ENCODE measurements at regions of chr2 and their contacts with region 1.

Region 1: DNA sequence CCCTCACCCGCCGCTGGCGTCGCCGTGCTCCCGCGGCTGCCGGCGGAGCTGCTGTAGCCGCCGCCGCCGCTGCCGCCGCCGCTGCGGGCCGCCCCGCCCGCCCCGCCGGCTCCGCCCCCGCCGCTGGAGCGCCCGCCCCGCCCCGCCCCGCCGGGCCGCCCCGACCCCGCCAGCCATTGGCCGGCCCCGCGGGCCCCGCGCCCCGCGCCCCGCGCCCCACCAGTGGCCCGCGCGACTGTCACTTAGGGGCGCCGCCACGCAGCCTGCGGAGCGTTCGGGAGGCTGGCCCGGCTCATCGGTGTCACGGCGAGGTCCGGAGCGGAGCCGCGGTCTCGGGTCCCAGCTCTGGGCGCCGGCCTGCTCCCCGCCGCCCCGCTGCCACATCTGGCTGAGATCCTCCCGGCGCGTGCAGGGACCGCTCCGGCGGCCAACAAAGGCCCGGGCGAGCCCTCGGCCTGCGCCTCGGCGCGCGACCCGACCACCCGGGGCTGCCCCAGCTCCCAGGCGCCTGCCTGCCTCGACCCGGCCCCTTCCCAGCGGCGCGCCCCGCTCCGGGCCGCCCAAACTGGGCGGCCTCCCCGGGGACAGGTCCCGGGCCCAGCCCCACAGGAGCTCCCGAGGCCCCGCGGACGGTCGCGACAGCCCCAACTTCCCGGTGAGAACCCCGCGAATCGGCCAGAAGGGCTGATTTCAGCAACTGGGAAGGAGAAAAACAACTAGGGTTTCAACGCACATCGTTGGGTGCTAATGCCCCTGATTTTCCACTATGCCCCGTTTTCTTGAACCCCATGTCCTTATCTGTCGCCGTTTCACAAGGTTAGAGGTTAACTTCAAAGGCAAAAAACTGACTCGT is at the start of gene MGAT4A:
- DNase-seq: peak; percentile 77 to 86 (median 82)
- H3K4me3 ChIP-seq: peak within 1 kb of the TSS; percentile 67 to 86
- H3K4me3 Mint-ChIP-seq: peak within 1 kb of the TSS; percentile 94 to 97 (median 94)
- H3K27ac ChIP-seq: peak within 1 kb of the TSS; percentile 95
- H3K27ac Mint-ChIP-seq: peak within 1 kb of the TSS; percentile 94 to 98 (median 96)
- H3K4me1 ChIP-seq: peaks cover 72% of the 10 kb centered on the region
- H3K4me1 Mint-ChIP-seq: peaks cover 44 to 80% (median 53%) of the 10 kb centered on the region in 4 donors
- H3K27me3 ChIP-seq: no peaks in the 10 kb centered on the region
- H3K27me3 Mint-ChIP-seq: no peaks in the 10 kb centered on the region
- total RNA-seq, gene MGAT4A: 256 to 270 TPM

Region 2: GRCh38 chr2:98444436-98445176 is 286.7 kb before region 1 on chr2 and contains the start of gene INPP4A:
- CTCF ChIA-PET with region 1: no interaction called
- POLR2A ChIA-PET with region 1: no interaction called
- intact Hi-C with region 1: loop called (anchors 5 kb)
- DNase-seq: peak; percentile 75 to 79 (median 79)
- H3K4me3 ChIP-seq: peak within 1 kb of the TSS; percentile 84 to 88
- H3K4me3 Mint-ChIP-seq: peak within 1 kb of the TSS; percentile 92 to 99 (median 98)
- H3K27ac ChIP-seq: peak within 1 kb of the TSS; percentile 78
- H3K27ac Mint-ChIP-seq: peak within 1 kb of the TSS; percentile 92 to 99 (median 96)
- H3K4me1 ChIP-seq: peaks cover 44% of the 10 kb centered on the region
- H3K4me1 Mint-ChIP-seq: peaks cover 18 to 49% (median 38%) of the 10 kb centered on the region in 4 donors
- H3K27me3 ChIP-seq: no peaks in the 10 kb centered on the region
- H3K27me3 Mint-ChIP-seq: no peaks in the 10 kb centered on the region
- total RNA-seq, gene INPP4A: 133 TPM

Region 3: DNA sequence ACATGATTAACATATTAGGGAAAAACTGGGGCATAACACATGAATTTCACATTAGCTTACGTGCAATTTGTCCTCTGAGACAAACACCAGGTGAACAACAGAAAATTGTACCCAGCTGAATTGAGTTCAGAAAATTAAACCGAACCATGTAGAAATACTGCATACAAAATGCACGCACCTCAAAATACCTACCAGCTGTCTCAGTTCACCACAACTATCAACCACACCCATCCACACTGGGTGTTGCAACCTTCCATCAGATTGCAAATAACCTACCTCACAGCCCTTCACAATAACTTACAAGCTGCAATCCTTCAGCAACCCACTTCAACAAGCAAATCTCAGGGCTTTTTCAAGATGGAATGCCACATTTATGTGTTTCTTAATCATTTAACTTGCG is 66.9 kb before region 1 on chr2:
- CTCF ChIA-PET with region 1: interaction called, 3 read pairs
- POLR2A ChIA-PET with region 1: interaction called, 292 read pairs
- intact Hi-C with region 1: loop called (anchors 2 kb)
- DNase-seq: peak; percentile 71 to 81 (median 78)
- H3K4me3 ChIP-seq: peak overlapping the region in 1 of 2 donors; percentile 54
- H3K4me3 Mint-ChIP-seq: peak overlapping the region; percentile 59 to 91 (median 84)
- H3K27ac ChIP-seq: peak overlapping the region; percentile 51
- H3K27ac Mint-ChIP-seq: peak overlapping the region; percentile 85 to 99 (median 92)
- H3K4me1 ChIP-seq: peaks cover 74% of the 10 kb centered on the region
- H3K4me1 Mint-ChIP-seq: peaks cover 52 to 91% (median 69%) of the 10 kb centered on the region in 4 donors
- H3K27me3 ChIP-seq: no peaks in the 10 kb centered on the region
- H3K27me3 Mint-ChIP-seq: no peaks in the 10 kb centered on the region

Region 4: GRCh38 chr2:98713332-98714015 is 17.8 kb before region 1 on chr2:
- CTCF ChIA-PET with region 1: interaction called, 14 read pairs
- POLR2A ChIA-PET with region 1: interaction called, 84 read pairs
- intact Hi-C with region 1: loop called (anchors 1 kb)
- DNase-seq: no peak
- H3K4me3 ChIP-seq: no peak overlapping the region
- H3K4me3 Mint-ChIP-seq: peak overlapping the region in 7 of 8 donors; percentile 25 to 76 (median 65)
- H3K27ac ChIP-seq: no peak overlapping the region
- H3K27ac Mint-ChIP-seq: peak overlapping the region; percentile 42 to 89 (median 81)
- H3K4me1 ChIP-seq: peaks cover 99% of the 10 kb centered on the region
- H3K4me1 Mint-ChIP-seq: peaks cover 72 to 98% (median 87%) of the 10 kb centered on the region in 4 donors
- H3K27me3 ChIP-seq: no peaks in the 10 kb centered on the region
- H3K27me3 Mint-ChIP-seq: no peaks in the 10 kb centered on the region

Region 5: DNA sequence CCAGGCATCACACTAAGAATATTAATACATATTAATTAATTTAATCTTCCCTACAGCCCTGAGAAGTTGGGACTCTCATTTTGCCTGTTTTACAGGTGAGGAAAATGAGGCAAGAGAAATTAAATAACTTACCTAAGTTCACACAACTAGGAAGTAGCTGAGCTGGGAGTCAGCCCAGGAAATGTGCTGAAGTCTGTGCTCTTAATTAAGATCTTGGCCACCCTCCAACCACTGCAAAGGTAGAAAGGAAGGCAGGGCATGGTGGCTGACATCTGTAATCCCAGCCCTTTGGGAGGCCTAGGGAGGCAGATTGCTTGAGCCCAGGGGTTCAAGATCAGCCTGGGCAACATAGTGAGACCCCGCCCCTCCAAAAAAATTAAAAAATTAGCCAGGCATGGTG is 12.6 kb after region 1 on chr2:
- CTCF ChIA-PET with region 1: interaction called, 7 read pairs
- POLR2A ChIA-PET with region 1: interaction called, 23 read pairs
- intact Hi-C with region 1: no loop called
- DNase-seq: no peak
- H3K4me3 ChIP-seq: no peak overlapping the region
- H3K4me3 Mint-ChIP-seq: peak overlapping the region in 6 of 8 donors; percentile 8 to 59 (median 40)
- H3K27ac ChIP-seq: no peak overlapping the region
- H3K27ac Mint-ChIP-seq: peak overlapping the region in 5 of 7 donors; percentile 23 to 86 (median 70)
- H3K4me1 ChIP-seq: peaks cover 45% of the 10 kb centered on the region
- H3K4me1 Mint-ChIP-seq: peaks cover 32 to 85% (median 46%) of the 10 kb centered on the region in 4 donors
- H3K27me3 ChIP-seq: no peaks in the 10 kb centered on the region
- H3K27me3 Mint-ChIP-seq: no peaks in the 10 kb centered on the region

Region 6: DNA sequence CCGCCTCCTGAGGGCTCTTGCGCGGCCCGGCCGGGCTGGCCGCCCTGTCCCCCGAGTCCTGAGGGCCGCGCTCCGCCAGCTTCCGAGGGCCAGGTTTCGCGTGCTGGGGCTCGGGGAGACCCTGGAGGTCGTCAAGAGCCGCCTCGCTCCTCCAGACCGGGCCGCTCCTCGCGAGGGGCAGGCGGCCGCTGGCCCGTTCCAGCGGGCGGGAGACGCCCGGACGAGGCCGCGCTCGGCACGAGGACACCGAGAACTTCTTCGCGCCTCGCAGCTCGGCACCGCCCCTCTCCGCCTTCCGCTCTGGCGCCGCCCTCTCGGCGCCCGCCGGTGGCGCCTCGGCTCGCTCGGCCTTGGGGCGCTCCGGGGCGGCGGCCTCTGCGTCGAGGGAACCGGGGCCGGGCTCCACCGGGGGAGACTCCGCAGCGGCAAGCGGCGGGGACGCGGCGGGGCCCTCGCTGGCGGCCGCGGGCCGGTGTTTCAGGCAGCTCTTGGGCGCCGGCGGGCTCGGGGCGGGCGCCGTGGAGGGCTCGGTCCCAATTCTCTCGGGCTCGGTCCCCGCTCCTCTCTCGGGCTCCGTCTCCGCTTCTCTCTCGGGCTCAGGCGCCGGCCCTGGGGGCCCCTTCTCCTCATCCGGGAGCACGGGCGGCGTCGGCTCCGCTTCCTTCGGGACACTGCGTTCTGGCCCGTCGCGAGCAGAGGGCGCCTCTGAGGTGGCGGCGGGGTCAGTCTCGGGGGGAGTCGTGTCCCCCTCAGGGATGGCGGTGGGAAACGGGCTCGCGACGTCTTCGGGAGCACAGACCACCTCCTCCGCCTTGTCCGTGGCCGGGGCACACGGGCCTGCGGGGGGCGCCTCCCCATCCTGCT is 91.3 kb after region 1 on chr2:
- CTCF ChIA-PET with region 1: interaction called, 4 read pairs
- POLR2A ChIA-PET with region 1: interaction called, 209 read pairs
- intact Hi-C with region 1: no loop called
- DNase-seq: peak; percentile 51 to 70 (median 64)
- H3K4me3 ChIP-seq: peak overlapping the region in 1 of 2 donors; percentile 43
- H3K4me3 Mint-ChIP-seq: peak overlapping the region in 5 of 8 donors; percentile 22 to 76 (median 54)
- H3K27ac ChIP-seq: peak overlapping the region; percentile 39
- H3K27ac Mint-ChIP-seq: no peak overlapping the region
- H3K4me1 ChIP-seq: peaks cover 20% of the 10 kb centered on the region
- H3K4me1 Mint-ChIP-seq: peaks cover 23 to 53% (median 36%) of the 10 kb centered on the region in 4 donors
- H3K27me3 ChIP-seq: no peaks in the 10 kb centered on the region
- H3K27me3 Mint-ChIP-seq: peaks cover 0 to 1% of the 10 kb centered on the region in 2 donors

Region 7: DNA sequence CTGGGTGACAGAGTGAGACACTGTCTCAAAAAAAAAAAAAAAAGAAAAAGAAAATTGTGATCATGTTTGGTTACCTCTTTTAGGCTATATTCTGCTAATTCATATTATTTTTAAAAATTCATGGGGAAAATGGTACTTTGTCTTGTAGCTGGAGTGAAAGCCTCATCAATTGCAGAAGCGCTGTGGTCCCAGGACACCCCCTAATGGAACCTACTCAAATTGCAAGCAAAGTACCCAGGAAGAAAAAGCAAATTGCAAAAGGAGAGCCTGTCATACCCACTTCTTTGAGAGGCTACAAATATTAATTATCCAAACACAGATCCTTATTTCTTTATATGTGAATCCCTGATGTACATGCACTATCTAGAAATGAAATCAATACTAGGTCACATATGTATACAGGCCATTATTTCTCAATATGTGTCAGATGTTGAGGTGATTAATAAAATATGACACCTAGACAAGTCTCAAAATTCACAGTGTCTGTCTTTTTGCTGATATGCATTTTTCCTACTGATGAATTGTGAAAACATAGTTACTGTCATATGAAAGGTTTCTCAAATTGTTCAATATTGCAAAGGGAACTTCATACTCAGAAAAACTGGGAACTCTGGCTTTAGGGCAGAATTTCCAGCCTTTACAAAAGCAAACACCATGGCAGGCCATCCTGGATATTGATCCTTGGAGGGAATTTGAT is 192.1 kb after region 1 on chr2:
- CTCF ChIA-PET with region 1: no interaction called
- POLR2A ChIA-PET with region 1: no interaction called
- intact Hi-C with region 1: no loop called
- DNase-seq: no peak
- H3K4me3 ChIP-seq: no peak overlapping the region
- H3K4me3 Mint-ChIP-seq: no peak overlapping the region
- H3K27ac ChIP-seq: no peak overlapping the region
- H3K27ac Mint-ChIP-seq: no peak overlapping the region
- H3K4me1 ChIP-seq: no peaks in the 10 kb centered on the region
- H3K4me1 Mint-ChIP-seq: no peaks in the 10 kb centered on the region
- H3K27me3 ChIP-seq: no peaks in the 10 kb centered on the region
- H3K27me3 Mint-ChIP-seq: peaks cover 16 to 27% of the 10 kb centered on the region in 2 donors